Caco-2 (cell line): ENCODE measurements at regions of chr11 and their contacts with region 1.

Region 1: GRCh38 chr11:35822815-35823495 is 120.9 kb upstream of the LDLRAD3 start:
- DNase-seq: no peak
- H3K4me3 ChIP-seq: no peak overlapping the region
- H3K4me3 Mint-ChIP-seq: no peak overlapping the region
- H3K27ac Mint-ChIP-seq: no peak overlapping the region
- H3K4me1 ChIP-seq: peaks cover 14% of the 10 kb centered on the region
- H3K4me1 Mint-ChIP-seq: peaks cover 15% of the 10 kb centered on the region
- H3K27me3 ChIP-seq: no peaks in the 10 kb centered on the region
- H3K27me3 Mint-ChIP-seq: no peaks in the 10 kb centered on the region
- CTCF ChIP-seq: no peak

Region 2: DNA sequence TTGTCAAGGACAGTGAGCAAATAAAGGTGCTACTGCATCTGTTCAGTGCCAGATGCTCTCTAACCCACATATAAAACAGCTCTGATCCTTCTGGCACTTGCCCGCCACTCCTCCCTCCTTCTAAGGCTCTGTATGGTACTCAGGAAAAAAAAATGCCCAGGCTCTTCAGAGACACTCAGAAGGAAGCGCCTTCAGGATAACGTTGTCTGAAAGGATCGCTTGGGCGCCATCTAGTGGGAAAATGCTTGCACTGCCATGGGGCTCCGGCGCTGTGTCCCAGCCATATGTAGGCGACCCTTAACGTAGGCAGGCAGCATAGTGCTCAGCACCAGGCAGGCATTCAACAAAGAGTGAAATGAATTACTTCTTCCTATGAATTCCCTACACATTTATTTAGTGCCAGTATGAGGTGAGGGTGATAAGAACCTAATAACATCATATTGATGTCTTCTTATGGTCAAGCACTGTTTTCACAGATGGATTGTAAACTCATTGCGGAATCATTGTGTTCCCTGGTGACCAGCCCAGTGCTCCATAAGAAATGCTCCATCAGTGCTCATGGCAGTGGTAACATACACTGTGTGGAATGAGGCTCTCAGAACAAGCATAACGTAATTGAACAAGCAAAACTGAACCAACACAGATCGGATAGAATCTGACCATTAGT is 337.2 kb before region 1 on chr11:
- CTCF ChIA-PET with region 1: interaction called, 4 read pairs
- POLR2A ChIA-PET with region 1: no interaction called
- intact Hi-C with region 1: loop called (anchors 10 kb)
- DNase-seq: peak; percentile 80 to 86
- H3K4me3 ChIP-seq: no peak overlapping the region
- H3K4me3 Mint-ChIP-seq: no peak overlapping the region
- H3K27ac Mint-ChIP-seq: no peak overlapping the region
- H3K4me1 ChIP-seq: no peaks in the 10 kb centered on the region
- H3K4me1 Mint-ChIP-seq: no peaks in the 10 kb centered on the region
- H3K27me3 ChIP-seq: no peaks in the 10 kb centered on the region
- H3K27me3 Mint-ChIP-seq: no peaks in the 10 kb centered on the region
- CTCF ChIP-seq: peak; percentile 87 to 96

Region 3: GRCh38 chr11:35804451-35805035 is 18.4 kb before region 1 on chr11:
- CTCF ChIA-PET with region 1: interaction called, 19 read pairs
- POLR2A ChIA-PET with region 1: no interaction called
- intact Hi-C with region 1: no loop called
- DNase-seq: no peak
- H3K4me3 ChIP-seq: no peak overlapping the region
- H3K4me3 Mint-ChIP-seq: no peak overlapping the region
- H3K27ac Mint-ChIP-seq: no peak overlapping the region
- H3K4me1 ChIP-seq: 0 out of 2 replicates have a peak, but pooled peaks cover 2% of the 10 kb centered on the region
- H3K4me1 Mint-ChIP-seq: no peaks in the 10 kb centered on the region
- H3K27me3 ChIP-seq: no peaks in the 10 kb centered on the region
- H3K27me3 Mint-ChIP-seq: no peaks in the 10 kb centered on the region
- CTCF ChIP-seq: no peak

Region 4: GRCh38 chr11:36041988-36042611 is 219.1 kb after region 1 on chr11:
- CTCF ChIA-PET with region 1: interaction called, 11 read pairs
- POLR2A ChIA-PET with region 1: no interaction called
- intact Hi-C with region 1: no loop called
- DNase-seq: peak in 1 of 2 experiments; percentile 32
- H3K4me3 ChIP-seq: no peak overlapping the region
- H3K4me3 Mint-ChIP-seq: no peak overlapping the region
- H3K27ac Mint-ChIP-seq: no peak overlapping the region
- H3K4me1 ChIP-seq: no peaks in the 10 kb centered on the region
- H3K4me1 Mint-ChIP-seq: no peaks in the 10 kb centered on the region
- H3K27me3 ChIP-seq: no peaks in the 10 kb centered on the region
- H3K27me3 Mint-ChIP-seq: no peaks in the 10 kb centered on the region
- CTCF ChIP-seq: peak; percentile 49 to 52

Region 5: DNA sequence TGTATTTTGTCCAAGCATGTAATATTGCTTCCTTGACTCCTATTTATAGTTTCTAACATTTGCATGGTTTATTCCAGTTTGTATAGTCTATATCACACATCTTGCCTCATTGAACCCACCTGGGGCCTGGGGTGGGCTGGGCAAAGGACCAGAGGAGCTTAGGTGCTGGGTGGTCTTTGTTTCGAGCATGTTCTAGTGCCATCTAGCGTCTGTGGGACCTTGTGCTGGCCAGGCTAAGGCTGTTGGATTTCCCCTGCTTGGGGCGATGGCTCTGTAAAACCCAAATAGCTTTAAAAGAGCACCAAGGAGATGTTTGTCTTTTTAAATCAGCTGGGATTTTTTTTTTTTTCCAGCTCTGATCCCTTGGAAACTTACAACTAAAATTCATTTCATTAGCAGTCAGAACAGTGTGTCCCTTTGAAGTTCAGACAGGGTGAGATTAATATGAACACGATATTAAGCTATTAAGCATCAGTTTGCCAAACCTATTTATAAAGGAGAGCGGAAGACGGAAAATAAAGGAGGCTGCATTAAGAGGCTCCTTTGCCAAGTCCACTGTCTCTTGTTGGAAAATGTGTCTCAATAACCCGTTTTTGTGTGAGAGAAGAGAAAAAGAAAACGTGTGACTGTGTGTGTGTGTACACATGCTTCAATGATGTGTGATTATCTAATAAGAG is 308.9 kb after region 1 on chr11:
- CTCF ChIA-PET with region 1: interaction called, 10 read pairs
- POLR2A ChIA-PET with region 1: no interaction called
- intact Hi-C with region 1: no loop called
- DNase-seq: peak in 1 of 2 experiments; percentile 19
- H3K4me3 ChIP-seq: no peak overlapping the region
- H3K4me3 Mint-ChIP-seq: no peak overlapping the region
- H3K27ac Mint-ChIP-seq: no peak overlapping the region
- H3K4me1 ChIP-seq: no peaks in the 10 kb centered on the region
- H3K4me1 Mint-ChIP-seq: peaks cover 13% of the 10 kb centered on the region
- H3K27me3 ChIP-seq: no peaks in the 10 kb centered on the region
- H3K27me3 Mint-ChIP-seq: no peaks in the 10 kb centered on the region
- CTCF ChIP-seq: peak in 1 of 2 experiments; percentile 50

Region 6: GRCh38 chr11:36265793-36266628 is 443.1 kb after region 1 on chr11:
- CTCF ChIA-PET with region 1: interaction called, 69 read pairs
- POLR2A ChIA-PET with region 1: no interaction called
- intact Hi-C with region 1: loop called (anchors 1 kb)
- DNase-seq: peak; percentile 54 to 75
- H3K4me3 ChIP-seq: no peak overlapping the region
- H3K4me3 Mint-ChIP-seq: no peak overlapping the region
- H3K27ac Mint-ChIP-seq: no peak overlapping the region
- H3K4me1 ChIP-seq: no peaks in the 10 kb centered on the region
- H3K4me1 Mint-ChIP-seq: peaks cover 6% of the 10 kb centered on the region
- H3K27me3 ChIP-seq: no peaks in the 10 kb centered on the region
- H3K27me3 Mint-ChIP-seq: no peaks in the 10 kb centered on the region
- CTCF ChIP-seq: peak; percentile 91 to 92